Activated CD4-positive, alpha-beta T cell treated with anti-CD3 and anti-CD28 coated beads for 36 hours (primary cell): ENCODE measurements at regions of chr1 and their contacts with region 1.

Region 1: DNA sequence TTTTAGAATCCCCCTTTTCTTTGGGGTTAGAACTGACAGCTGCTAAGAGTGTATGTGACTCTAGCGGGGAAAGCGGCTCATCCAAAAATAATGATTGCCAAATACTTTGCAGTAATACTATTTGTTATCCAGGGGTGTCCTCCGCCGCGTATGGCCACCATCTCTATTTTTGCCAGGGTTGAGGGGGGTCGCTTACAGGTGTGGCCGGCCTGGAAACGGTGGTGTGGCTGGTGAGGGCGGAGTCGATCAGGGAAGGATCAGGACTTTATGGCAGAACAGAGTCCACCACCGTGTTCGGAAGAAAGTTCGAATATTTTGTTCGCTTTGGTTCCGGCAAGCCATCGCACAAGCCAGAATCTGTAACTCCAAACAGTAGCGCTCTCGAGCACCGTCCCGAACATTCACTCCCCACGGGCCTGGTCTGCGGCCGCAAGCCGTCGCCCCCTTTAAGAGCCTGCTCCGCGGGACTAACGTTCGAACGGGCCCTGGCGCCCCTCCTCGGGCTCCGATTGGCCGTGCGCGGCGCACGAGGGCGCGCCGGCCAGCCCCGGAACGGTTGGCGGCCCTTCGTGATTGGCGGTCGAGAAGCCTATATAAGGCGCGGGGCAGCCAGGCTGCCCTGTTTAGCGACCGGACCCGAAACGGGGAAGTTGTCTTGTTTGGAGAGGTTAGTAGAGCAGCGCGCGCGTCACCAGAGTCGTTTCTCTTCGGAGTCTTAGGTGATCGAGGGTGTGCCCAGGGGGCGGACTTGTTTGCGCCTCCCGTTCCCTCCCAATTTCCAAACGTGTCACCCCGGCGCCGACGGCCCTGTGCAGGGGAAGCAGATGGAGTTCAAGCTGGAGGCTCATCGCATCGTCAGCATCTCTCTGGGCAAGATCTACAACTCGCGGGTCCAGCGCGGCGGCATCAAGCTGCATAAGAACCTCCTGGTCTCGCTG is at the start of gene IER5:
- DNase-seq: peak; percentile 97
- ATAC-seq: peak; percentile 80
- H3K4me3 Mint-ChIP-seq: peak within 1 kb of the TSS; percentile 100
- H3K27ac Mint-ChIP-seq: peak within 1 kb of the TSS; percentile 100
- H3K4me1 Mint-ChIP-seq: peaks cover 53% of the 10 kb centered on the region
- H3K27me3 Mint-ChIP-seq: no peaks in the 10 kb centered on the region
- total RNA-seq, gene IER5: 16.3 to 24.3 TPM

Region 2: GRCh38 chr1:180154325-180155181 is 933.8 kb before region 1 on chr1 and contains the start of gene QSOX1:
- CTCF ChIA-PET with region 1: no interaction called
- POLR2A ChIA-PET with region 1: interaction called, 3 read pairs
- intact Hi-C with region 1: loop called in 1 of 2 experiments (anchors 10 kb)
- DNase-seq: peak; percentile 95
- ATAC-seq: peak; percentile 97
- H3K4me3 Mint-ChIP-seq: peak within 1 kb of the TSS; percentile 90
- H3K27ac Mint-ChIP-seq: peak within 1 kb of the TSS; percentile 85
- H3K4me1 Mint-ChIP-seq: peaks cover 25% of the 10 kb centered on the region
- H3K27me3 Mint-ChIP-seq: no peaks in the 10 kb centered on the region
- total RNA-seq, gene QSOX1: 18.3 to 31.6 TPM

Region 3: DNA sequence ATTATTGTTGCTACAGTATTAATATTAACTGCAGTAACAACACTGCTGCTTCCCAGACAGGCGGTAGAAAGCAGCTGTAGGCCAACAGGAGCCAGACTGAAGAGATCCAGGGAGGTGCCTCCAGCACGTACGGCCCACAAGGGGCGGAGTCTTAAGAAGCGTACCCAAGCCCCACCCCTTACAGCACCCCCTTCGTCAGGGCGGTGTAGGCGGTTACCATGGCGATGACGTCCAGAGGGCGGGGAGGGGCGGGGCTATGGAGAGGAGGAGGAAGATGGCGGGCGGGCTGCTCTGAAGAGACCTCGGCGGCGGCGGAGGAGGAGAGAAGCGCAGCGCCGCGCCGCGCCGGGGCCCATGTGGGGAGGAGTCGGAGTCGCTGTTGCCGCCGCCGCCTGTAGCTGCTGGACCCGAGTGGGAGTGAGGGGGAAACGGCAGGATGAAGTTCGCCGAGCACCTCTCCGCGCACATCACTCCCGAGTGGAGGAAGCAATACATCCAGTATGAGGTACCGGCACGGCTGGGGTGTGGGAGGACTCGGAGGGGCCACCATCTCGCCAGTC is 456.5 kb before region 1 on chr1 and contains the start of gene XPR1:
- CTCF ChIA-PET with region 1: interaction called, 3 read pairs
- POLR2A ChIA-PET with region 1: no interaction called
- intact Hi-C with region 1: loop called (anchors 5 kb)
- DNase-seq: peak; percentile 99
- ATAC-seq: peak; percentile 99
- H3K4me3 Mint-ChIP-seq: no peak within 1 kb of the TSS
- H3K27ac Mint-ChIP-seq: peak within 1 kb of the TSS; percentile 76
- H3K4me1 Mint-ChIP-seq: peaks cover 9% of the 10 kb centered on the region
- H3K27me3 Mint-ChIP-seq: peaks cover 3% of the 10 kb centered on the region
- total RNA-seq, gene XPR1: 18.4 to 25.2 TPM

Region 4: DNA sequence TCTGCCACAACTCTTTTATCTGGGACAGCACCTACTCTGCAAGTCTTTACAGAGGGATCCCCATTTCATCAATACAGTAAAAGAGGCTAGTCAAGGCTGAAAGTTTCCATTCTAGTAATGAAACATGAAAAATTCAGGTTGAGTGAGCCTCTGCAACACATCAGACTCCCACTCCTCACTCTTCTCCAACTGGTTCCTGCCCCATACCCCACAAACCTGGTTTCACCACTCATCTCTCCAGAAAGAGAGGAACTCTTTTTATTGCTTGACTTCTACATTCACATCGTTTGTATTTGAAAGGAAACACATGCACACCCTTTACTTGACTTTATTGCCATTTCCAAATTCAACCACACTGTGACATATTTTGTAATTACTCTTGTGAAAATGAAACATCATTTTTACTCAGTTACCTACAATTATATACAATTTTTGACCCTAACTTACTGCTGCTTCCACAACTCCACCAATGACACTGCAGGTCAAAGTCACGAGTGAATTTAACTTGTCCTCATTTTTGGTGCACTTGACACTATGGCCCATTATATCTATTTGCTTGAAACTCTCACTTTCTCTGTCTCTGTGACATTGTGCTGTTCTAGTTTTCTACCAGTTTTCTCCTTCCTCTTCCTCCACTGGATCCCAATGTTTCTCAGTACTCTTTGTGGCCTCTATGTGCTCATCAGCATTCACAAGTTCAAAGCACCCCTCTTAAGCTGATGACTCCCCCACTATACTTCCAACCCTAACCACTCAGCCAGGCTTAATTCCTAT is 73.7 kb before region 1 on chr1:
- CTCF ChIA-PET with region 1: interaction called, 3 read pairs
- POLR2A ChIA-PET with region 1: no interaction called
- intact Hi-C with region 1: loop called in 1 of 2 experiments (anchors 1 kb)
- DNase-seq: peak; percentile 54
- ATAC-seq: peak; percentile 78
- H3K4me3 Mint-ChIP-seq: no peak overlapping the region
- H3K27ac Mint-ChIP-seq: no peak overlapping the region
- H3K4me1 Mint-ChIP-seq: peaks cover 46% of the 10 kb centered on the region
- H3K27me3 Mint-ChIP-seq: no peaks in the 10 kb centered on the region

Region 5: DNA sequence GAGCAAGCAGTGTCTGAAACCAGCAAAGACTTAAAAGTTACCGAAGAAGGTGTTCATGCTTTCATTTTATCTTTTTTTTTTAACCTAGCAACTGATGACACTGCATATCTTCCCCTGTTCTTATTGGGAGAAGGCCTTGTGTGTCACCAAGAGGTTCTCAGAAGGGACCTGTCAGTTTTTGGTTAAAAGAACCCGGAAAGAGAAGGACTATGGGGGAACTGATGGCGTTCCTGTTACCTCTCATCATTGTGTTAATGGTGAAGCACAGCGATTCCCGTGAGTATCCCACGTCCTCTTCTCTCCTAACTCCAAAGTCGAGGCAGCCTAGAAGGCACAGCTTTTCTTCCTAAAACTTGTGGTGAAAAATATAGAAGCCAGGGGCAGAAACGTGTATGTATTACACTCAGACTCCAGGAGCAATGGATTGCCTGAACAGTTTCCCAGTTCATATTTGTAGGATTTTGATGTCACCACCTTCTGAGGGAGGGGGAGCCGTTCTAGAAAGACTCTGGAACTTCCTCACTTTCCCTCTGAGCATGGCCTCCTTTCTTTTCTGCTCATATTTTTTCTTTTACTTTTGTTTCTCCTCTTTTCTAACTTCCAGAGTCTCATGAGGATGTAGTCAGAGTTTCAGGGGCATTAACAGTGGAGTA is 54.4 kb before region 1 on chr1 and contains the start of gene MR1:
- CTCF ChIA-PET with region 1: interaction called, 9 read pairs
- POLR2A ChIA-PET with region 1: interaction called, 11 read pairs
- intact Hi-C with region 1: loop called (anchors 1 kb)
- DNase-seq: peak; percentile 37
- ATAC-seq: peak; percentile 95
- H3K4me3 Mint-ChIP-seq: peak within 1 kb of the TSS; percentile 81
- H3K27ac Mint-ChIP-seq: peak within 1 kb of the TSS; percentile 100
- H3K4me1 Mint-ChIP-seq: peaks cover 55% of the 10 kb centered on the region
- H3K27me3 Mint-ChIP-seq: no peaks in the 10 kb centered on the region
- total RNA-seq, gene MR1: 21.5 to 25.3 TPM

Region 6: DNA sequence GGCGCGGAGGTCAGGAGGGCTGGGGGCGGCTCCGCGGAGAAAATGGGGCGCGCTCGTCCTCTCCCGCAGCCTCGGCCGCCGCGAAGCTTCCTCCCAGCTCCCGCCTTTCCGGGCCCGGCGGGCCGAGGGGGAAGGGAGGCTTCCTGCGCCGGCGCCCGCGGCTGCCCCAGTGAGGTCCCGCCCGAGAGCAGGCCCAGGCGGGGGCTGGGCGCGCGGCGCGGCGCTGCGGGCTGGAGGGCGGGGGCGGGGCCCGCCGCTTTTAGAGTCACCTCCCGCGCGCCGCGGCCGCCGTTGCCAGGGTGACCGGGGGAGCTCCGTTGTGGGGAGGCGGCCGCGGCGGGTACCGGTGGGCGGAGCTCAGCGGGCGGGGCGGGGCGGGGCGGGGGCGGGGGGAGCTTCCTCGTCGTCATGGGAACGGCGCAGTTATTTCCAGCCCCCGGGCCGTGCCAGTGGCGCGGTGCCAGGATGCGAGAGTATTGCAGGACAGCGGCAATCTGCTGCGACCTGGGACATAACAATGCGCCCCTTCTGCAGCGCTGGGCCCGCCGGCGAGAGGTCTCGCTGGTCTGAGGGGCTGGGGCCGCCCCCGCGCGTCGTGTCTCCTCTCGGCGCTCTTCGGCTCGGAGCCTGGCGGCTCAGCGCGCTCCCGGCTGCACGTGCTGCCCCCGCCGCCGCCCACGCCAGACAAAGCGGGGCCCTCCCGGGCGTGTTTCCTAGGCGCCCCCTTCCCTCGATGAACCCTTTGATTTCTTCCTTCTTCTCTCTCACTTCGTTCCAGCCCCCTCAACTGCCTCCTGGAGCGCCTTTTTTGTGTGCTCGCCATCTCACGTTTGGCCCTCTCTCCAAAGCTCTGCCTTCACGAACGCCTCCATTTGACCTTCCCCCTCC is 17.0 kb after region 1 on chr1:
- CTCF ChIA-PET with region 1: interaction called, 24 read pairs
- POLR2A ChIA-PET with region 1: interaction called, 33 read pairs
- intact Hi-C with region 1: loop called (anchors 1 to 2 kb)
- DNase-seq: peak; percentile 95
- ATAC-seq: peak; percentile 83
- H3K4me3 Mint-ChIP-seq: peak overlapping the region; percentile 72
- H3K27ac Mint-ChIP-seq: peak overlapping the region; percentile 55
- H3K4me1 Mint-ChIP-seq: peaks cover 59% of the 10 kb centered on the region
- H3K27me3 Mint-ChIP-seq: peaks cover 15% of the 10 kb centered on the region

Region 7: GRCh38 chr1:181397845-181398244 is 309.5 kb after region 1 on chr1:
- CTCF ChIA-PET with region 1: no interaction called
- POLR2A ChIA-PET with region 1: no interaction called
- intact Hi-C with region 1: loop called in 1 of 2 experiments (anchors 5 kb)
- DNase-seq: peak; percentile 17
- ATAC-seq: peak; percentile 27
- H3K4me3 Mint-ChIP-seq: no peak overlapping the region
- H3K27ac Mint-ChIP-seq: peak overlapping the region; percentile 76
- H3K4me1 Mint-ChIP-seq: peaks cover 31% of the 10 kb centered on the region
- H3K27me3 Mint-ChIP-seq: no peaks in the 10 kb centered on the region

Region 8: GRCh38 chr1:181818943-181819342 is 730.6 kb after region 1 on chr1:
- CTCF ChIA-PET with region 1: no interaction called
- POLR2A ChIA-PET with region 1: no interaction called
- intact Hi-C with region 1: no loop called
- DNase-seq: no peak
- ATAC-seq: no peak
- H3K4me3 Mint-ChIP-seq: no peak overlapping the region
- H3K27ac Mint-ChIP-seq: no peak overlapping the region
- H3K4me1 Mint-ChIP-seq: no peaks in the 10 kb centered on the region
- H3K27me3 Mint-ChIP-seq: peaks cover 13% of the 10 kb centered on the region